ENCODE measurements at regions of chr7 and their contacts with region 1.

Region 1: DNA sequence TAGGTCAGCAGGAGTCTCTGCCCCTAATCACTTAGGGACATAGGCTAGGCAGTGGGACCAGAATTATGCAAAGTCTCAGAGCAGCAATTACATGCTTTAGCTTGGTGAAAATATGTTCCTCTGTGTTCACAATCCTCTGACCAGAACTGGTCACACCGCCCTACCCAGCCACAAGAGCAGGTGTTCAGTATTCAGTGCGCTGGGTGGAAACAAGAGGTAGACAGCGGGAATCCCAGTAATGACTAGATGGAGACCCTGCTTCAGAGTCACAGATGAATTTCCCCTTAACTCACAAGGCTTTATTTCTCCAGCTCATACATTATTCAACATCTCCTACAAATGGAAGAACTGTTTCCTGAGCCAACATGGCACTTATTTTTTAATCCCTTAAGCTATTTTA is 763.7 kb upstream of the POM121L12 start:
- DNase-seq: no peak
- ATAC-seq: no peak
- H3K4me3 ChIP-seq: no peak overlapping the region
- H3K27ac ChIP-seq: no peak overlapping the region
- H3K4me1 ChIP-seq: peaks cover 10% of the 10 kb centered on the region
- H3K27me3 ChIP-seq: no peaks in the 10 kb centered on the region
- CTCF ChIP-seq: no peak

Region 2: DNA sequence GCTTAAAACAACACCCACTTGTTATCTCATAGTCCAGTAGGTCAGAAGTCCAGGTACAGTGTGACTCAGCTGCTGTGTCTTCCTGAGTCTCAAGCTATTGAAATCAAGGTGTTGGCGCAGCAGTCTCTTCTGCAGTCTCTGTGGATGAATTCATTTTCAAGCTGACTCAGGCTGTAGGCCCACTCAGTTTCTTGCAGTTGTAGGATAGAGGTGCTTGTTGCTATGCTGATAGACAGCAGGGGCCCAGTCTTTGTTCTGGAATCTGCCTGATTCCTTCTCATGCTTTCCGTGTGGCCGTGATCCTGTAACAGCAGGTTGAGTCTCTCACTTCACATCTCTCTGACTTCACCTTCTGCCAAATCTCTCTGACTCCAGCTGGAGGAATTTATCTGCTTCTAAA is 363.3 kb after region 1 on chr7:
- CTCF ChIA-PET with region 1: no interaction called
- POLR2A ChIA-PET with region 1: interaction called, 13 read pairs
- intact Hi-C with region 1: no loop called
- DNase-seq: peak; percentile 14
- ATAC-seq: no peak
- H3K4me3 ChIP-seq: no peak overlapping the region
- H3K27ac ChIP-seq: no peak overlapping the region
- H3K4me1 ChIP-seq: no peaks in the 10 kb centered on the region
- H3K27me3 ChIP-seq: no peaks in the 10 kb centered on the region
- CTCF ChIP-seq: no peak

Region 3: GRCh38 chr7:52992479-52993162 is 720.9 kb after region 1 on chr7:
- CTCF ChIA-PET with region 1: no interaction called
- POLR2A ChIA-PET with region 1: no interaction called
- intact Hi-C with region 1: no loop called
- DNase-seq: no peak
- ATAC-seq: no peak
- H3K4me3 ChIP-seq: no peak overlapping the region
- H3K27ac ChIP-seq: no peak overlapping the region
- H3K4me1 ChIP-seq: no peaks in the 10 kb centered on the region
- H3K27me3 ChIP-seq: no peaks in the 10 kb centered on the region
- CTCF ChIP-seq: no peak

Measured in PC-3 (cell line).